Activated T-helper 2 cell treated with anti-CD3 and anti-CD28 coated beads, Interferon-gamma antibody, Interleukin-2, Interleukin-4, amounts not matched to agents 10 μg/mL and 5 μg/mL and 100 μg/mL, durations not matched to agents 14 hours and 24 hours and 36 hours (primary cell): ENCODE measurements at regions of chr1 and their contacts with region 1.

Region 1: DNA sequence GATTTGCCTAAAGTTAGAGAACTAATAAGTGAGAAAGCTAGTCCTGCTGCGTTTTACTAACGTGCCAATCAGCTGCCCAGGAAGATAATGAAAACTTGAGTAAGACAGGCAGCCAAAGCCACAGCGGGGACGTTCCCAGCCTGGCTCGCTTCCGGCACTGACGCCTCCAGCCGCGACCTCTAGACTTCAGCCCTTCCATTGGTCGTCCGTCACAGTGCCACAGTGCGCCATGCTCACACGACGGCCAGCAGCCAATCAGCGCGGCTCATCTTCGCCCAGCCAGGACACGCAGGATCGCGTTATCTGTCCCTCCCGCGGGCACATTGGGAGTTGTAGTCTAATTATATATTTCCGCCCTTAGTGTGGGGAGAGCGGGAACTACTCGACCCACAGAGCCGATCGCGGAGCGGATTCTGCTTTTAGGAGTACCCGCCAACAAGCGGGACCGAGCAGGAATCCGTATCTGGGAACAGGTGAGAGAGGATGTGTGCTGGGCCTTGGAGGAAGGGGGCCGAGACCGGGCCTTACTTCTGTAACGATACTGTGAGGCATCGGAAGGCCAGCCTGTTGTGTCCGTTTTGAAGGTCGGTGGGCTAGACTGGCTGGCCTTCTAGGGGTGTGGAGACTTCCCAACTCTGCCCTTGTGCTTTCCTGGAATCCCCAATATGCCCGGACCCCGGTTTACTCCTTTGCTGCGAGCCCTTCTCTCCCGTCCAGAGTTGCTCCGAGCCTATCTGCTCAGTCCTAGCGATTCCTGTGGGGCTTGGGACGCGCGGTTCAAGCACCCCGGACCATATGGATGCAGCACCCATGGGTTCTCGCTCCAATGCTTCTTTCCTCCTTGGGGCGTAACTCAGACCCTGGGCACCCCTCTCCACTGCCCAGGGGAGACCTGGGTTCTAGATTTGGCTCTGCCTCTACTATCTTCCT is at the start of gene FDPS:
- DNase-seq: peak; percentile 98
- H3K4me3 Mint-ChIP-seq: peak within 1 kb of the TSS; percentile 98
- H3K27ac Mint-ChIP-seq: peak within 1 kb of the TSS; percentile 97
- H3K4me1 Mint-ChIP-seq: peaks cover 38% of the 10 kb centered on the region
- H3K27me3 Mint-ChIP-seq: no peaks in the 10 kb centered on the region
- total RNA-seq, gene FDPS: 342 and 361 TPM in 2 replicates

Region 2: DNA sequence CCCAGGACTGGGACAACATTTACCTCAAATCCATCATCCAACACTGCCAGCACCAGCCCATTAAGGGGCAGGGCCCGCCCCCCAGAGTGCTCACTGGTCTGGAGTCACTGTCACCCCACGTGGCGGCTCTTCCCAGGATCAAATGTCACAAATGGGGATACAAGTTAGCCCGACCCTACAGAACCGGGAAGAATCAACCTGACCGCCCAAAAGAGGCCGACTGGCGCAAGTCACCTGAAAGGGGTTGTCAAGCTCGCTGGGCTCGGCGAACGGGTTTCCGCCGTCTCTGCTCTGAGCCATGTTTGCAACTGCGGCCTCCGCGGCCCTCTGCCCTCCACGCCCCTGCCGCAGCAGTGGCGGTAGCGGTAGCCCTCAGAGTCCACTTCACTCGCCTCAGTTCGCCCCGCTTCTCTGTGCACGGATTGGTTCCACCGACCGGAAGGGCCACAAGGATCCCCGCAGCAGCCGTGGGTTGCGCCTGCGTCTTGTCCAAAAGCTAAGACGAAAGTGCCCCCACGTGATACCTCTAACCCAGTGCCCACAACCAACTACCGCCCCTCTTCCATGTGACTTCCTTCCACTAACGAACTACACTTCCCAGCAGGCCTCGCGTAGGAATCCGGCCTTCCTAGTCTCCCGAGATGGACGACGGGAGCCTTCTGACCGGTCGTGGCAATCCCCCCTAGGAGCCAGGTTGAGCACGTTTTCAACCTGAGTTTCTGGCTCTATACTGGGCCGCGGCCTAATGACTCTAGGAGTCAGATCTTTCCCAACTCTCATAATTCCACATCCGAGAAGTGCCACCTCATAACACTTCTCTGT is 46.7 kb before region 1 on chr1 and contains the start of gene SCAMP3:
- intact Hi-C with region 1: loop called (anchors 5 kb)
- DNase-seq: peak; percentile 85
- H3K4me3 Mint-ChIP-seq: peak within 1 kb of the TSS; percentile 98
- H3K27ac Mint-ChIP-seq: peak within 1 kb of the TSS; percentile 90
- H3K4me1 Mint-ChIP-seq: peaks cover 21% of the 10 kb centered on the region
- H3K27me3 Mint-ChIP-seq: no peaks in the 10 kb centered on the region
- total RNA-seq, gene SCAMP3: 113 and 123 TPM in 2 replicates

Region 3: GRCh38 chr1:155295183-155295941 is 13.4 kb before region 1 on chr1:
- intact Hi-C with region 1: no loop called
- DNase-seq: no peak
- H3K4me3 Mint-ChIP-seq: no peak overlapping the region
- H3K27ac Mint-ChIP-seq: no peak overlapping the region
- H3K4me1 Mint-ChIP-seq: peaks cover 8% of the 10 kb centered on the region
- H3K27me3 Mint-ChIP-seq: peaks cover 48% of the 10 kb centered on the region

Region 4: GRCh38 chr1:155323798-155324610 is 15.2 kb after region 1 on chr1:
- intact Hi-C with region 1: loop called (anchors 1 kb)
- DNase-seq: peak; percentile 89
- H3K4me3 Mint-ChIP-seq: peak overlapping the region; percentile 81
- H3K27ac Mint-ChIP-seq: peak overlapping the region; percentile 79
- H3K4me1 Mint-ChIP-seq: peaks cover 30% of the 10 kb centered on the region
- H3K27me3 Mint-ChIP-seq: no peaks in the 10 kb centered on the region